PC-9 (cell line): ENCODE measurements at regions of chr6 and their contacts with region 1.

Region 1: GRCh38 chr6:138493413-138493812 is 5.9 kb downstream of the NHSL1 start:
- DNase-seq: peak in 1 of 2 experiments; percentile 31
- H3K4me3 ChIP-seq: no peak overlapping the region
- H3K27ac ChIP-seq: no peak overlapping the region
- H3K4me1 ChIP-seq: no peaks in the 10 kb centered on the region
- H3K27me3 ChIP-seq: no peaks in the 10 kb centered on the region
- CTCF ChIP-seq: no peak

Region 2: DNA sequence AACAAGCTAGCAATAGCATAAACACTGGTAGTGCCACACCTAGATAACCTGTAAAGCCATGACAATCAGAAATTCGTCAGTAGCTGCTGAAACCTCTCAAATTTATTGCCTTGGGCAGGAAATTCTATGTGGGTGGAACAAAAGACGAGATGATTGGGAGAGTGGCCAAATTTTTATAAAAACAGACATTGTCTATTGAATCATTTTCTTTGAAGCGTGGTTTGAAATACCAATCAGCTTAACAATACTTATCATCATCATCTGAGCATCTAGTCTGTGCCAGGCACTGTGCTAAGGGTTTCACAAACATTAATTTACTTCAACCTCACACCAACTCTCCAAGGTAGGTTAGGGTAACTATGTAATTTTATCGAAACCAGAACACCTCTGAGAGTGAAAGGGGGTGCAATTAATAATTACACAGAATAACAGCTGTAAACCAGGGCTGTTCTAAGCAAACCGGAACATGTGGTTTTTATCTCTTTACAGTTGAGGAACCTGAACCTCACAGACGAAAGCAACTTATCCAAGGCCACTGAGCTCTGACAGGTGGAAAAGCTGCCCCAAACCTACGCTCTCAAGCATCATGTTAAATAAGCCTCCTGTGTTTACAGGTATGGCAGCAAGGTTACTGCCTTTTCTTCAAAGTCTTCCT is 37.5 kb before region 1 on chr6:
- CTCF ChIA-PET with region 1: no interaction called
- POLR2A ChIA-PET with region 1: no interaction called
- intact Hi-C with region 1: loop called (anchors 5 kb)
- DNase-seq: peak; percentile 17 to 82
- H3K4me3 ChIP-seq: peak overlapping the region; percentile 9; the same call in 1 of the 2 replicates
- H3K27ac ChIP-seq: peak overlapping the region; percentile 52
- H3K4me1 ChIP-seq: peaks cover 22% of the 10 kb centered on the region
- H3K27me3 ChIP-seq: no peaks in the 10 kb centered on the region
- CTCF ChIP-seq: no peak

Region 3: GRCh38 chr6:138465007-138465645 is 28.3 kb before region 1 on chr6:
- CTCF ChIA-PET with region 1: no interaction called
- POLR2A ChIA-PET with region 1: interaction called, 10 read pairs
- intact Hi-C with region 1: no loop called
- DNase-seq: peak; percentile 47 to 99
- H3K4me3 ChIP-seq: no peak overlapping the region; the same call in 1 of the 2 replicates
- H3K27ac ChIP-seq: peak overlapping the region; percentile 77
- H3K4me1 ChIP-seq: peaks cover 57% of the 10 kb centered on the region
- H3K27me3 ChIP-seq: no peaks in the 10 kb centered on the region
- CTCF ChIP-seq: no peak

Region 4: GRCh38 chr6:138509371-138509770 is 16.0 kb after region 1 on chr6:
- CTCF ChIA-PET with region 1: no interaction called
- POLR2A ChIA-PET with region 1: no interaction called
- intact Hi-C with region 1: no loop called
- DNase-seq: peak; percentile 8 to 53
- H3K4me3 ChIP-seq: no peak overlapping the region
- H3K27ac ChIP-seq: no peak overlapping the region
- H3K4me1 ChIP-seq: no peaks in the 10 kb centered on the region
- H3K27me3 ChIP-seq: no peaks in the 10 kb centered on the region
- CTCF ChIP-seq: peak; percentile 69